Endothelial cell of umbilical vein (primary cell): ENCODE measurements at regions of chr17 and their contacts with region 1.

Region 1: GRCh38 chr17:48131216-48131824 is 23.8 kb downstream of the SNX11 start:
- DNase-seq: peak; percentile 63
- H3K4me3 ChIP-seq: no peak overlapping the region
- H3K27ac ChIP-seq: no peak overlapping the region
- H3K4me1 ChIP-seq: peaks cover 15% of the 10 kb centered on the region
- H3K27me3 ChIP-seq: peaks cover 0 to 2% of the 10 kb centered on the region in 2 experiments
- CTCF ChIP-seq: peak; percentile 75 to 81
- POLR2A ChIP-seq: no peak

Region 2: GRCh38 chr17:48084932-48085444 is 46.3 kb before region 1 on chr17:
- CTCF ChIA-PET with region 1: interaction called, 167 read pairs
- POLR2A ChIA-PET with region 1: no interaction called
- dilution Hi-C with region 1: no loop called
- intact Hi-C with region 1: loop called (anchors 1 kb)
- DNase-seq: no peak
- H3K4me3 ChIP-seq: no peak overlapping the region
- H3K27ac ChIP-seq: no peak overlapping the region
- H3K4me1 ChIP-seq: peaks cover 4% of the 10 kb centered on the region
- H3K27me3 ChIP-seq: no peaks in the 10 kb centered on the region
- CTCF ChIP-seq: no peak
- POLR2A ChIP-seq: no peak

Region 3: DNA sequence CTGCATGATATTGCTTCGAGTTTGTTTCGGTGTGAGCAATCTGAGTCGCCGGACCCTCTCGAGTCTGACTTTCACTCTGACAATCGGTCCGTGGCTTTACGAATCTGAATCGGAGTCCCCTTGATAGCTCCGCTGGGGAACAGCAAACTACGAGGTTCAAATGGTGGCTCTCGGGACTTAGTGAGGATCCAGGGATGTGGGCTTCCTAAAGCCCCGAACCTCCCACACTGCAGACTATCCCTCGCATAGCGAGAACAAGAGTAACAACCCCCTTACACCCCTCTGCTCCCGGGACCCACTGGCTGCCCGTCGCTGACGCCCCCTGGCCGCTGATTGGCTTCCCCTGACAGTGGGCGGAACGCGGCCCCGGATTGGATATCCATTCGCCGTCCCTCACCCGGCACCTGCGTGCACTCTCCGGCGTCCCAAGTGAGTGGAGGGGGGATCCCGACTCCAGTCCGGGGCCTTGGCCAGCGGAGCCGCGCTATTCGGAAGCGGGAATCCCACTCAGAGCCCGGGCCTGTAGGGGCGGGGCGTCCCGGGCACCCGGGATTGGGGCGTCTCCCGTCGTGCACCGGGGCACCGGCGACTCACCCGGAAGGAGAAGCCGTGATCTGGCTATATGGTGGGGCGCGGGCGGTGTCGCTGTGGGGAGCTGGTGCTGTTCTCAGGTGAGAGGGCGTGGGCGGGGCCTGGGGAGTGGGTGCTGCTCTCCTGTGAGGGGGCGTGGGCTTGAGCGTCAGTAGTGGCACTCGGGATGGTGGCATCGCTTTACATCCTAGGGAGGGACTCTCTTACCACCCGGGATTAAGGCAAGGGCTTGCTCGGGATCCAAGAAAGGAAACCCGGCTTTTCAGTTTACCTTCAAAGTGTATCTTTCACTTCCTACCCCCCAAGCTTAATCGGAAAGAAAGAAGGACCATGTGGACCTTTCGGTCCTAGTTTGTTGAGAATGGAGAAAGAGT is 23.9 kb before region 1 on chr17 and contains the start of gene SNX11:
- CTCF ChIA-PET with region 1: interaction called, 12 read pairs
- POLR2A ChIA-PET with region 1: no interaction called
- dilution Hi-C with region 1: no loop called
- intact Hi-C with region 1: loop called (anchors 1 kb)
- DNase-seq: peak; percentile 89
- H3K4me3 ChIP-seq: peak within 1 kb of the TSS; percentile 56 to 99 (median 92)
- H3K27ac ChIP-seq: peak within 1 kb of the TSS; percentile 68
- H3K4me1 ChIP-seq: peaks cover 10% of the 10 kb centered on the region
- H3K27me3 ChIP-seq: no peaks in the 10 kb centered on the region
- CTCF ChIP-seq: no peak
- POLR2A ChIP-seq: peak; percentile 82
- total RNA-seq, gene SNX11: 23.4 and 26.4 TPM in 2 replicates

Region 4: DNA sequence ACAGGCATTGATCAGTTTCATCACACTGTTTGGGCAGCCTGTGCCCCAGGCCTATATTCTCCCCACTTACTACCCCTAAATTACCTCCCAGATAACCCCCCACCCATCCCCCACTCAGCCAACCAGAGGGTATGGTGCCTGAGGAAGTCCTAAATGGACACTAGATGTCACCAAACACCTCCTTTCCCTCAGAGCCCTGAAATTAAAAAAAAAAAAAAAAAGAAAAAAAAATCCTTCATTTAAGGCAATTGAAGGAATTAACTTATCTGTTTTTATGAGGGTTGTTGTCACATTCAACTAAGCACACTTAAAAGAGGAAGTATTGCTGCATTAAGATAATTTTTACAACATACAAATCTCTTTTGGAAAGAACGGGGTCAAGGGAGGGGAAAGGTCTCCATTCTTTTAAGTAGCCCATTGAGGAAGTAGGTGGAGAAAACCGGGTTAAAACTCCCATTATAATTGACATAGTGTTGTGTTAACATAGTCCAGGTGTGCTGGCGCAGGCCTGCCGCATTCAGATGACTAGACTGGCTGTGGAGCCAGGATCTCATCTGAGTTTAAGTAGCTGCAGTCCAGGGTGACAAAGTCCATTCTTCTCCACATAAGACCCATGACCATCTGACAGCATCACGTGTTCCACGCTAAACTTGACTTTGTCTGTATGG is 22.5 kb after region 1 on chr17:
- CTCF ChIA-PET with region 1: interaction called, 10 read pairs
- POLR2A ChIA-PET with region 1: no interaction called
- dilution Hi-C with region 1: no loop called
- intact Hi-C with region 1: no loop called
- DNase-seq: peak; percentile 52
- H3K4me3 ChIP-seq: no peak overlapping the region
- H3K27ac ChIP-seq: no peak overlapping the region
- H3K4me1 ChIP-seq: no peaks in the 10 kb centered on the region
- H3K27me3 ChIP-seq: peaks cover 26 to 36% of the 10 kb centered on the region in 2 experiments
- CTCF ChIP-seq: peak; percentile 31 to 38
- POLR2A ChIP-seq: no peak

Region 5: GRCh38 chr17:48181653-48182052 is 50.3 kb after region 1 on chr17:
- CTCF ChIA-PET with region 1: no interaction called
- POLR2A ChIA-PET with region 1: no interaction called
- dilution Hi-C with region 1: no loop called
- intact Hi-C with region 1: no loop called
- DNase-seq: peak; percentile 31
- H3K4me3 ChIP-seq: no peak overlapping the region
- H3K27ac ChIP-seq: no peak overlapping the region
- H3K4me1 ChIP-seq: no peaks in the 10 kb centered on the region
- H3K27me3 ChIP-seq: peaks cover 9 to 23% of the 10 kb centered on the region in 2 experiments
- CTCF ChIP-seq: peak; percentile 37 to 52
- POLR2A ChIP-seq: no peak

Region 6: DNA sequence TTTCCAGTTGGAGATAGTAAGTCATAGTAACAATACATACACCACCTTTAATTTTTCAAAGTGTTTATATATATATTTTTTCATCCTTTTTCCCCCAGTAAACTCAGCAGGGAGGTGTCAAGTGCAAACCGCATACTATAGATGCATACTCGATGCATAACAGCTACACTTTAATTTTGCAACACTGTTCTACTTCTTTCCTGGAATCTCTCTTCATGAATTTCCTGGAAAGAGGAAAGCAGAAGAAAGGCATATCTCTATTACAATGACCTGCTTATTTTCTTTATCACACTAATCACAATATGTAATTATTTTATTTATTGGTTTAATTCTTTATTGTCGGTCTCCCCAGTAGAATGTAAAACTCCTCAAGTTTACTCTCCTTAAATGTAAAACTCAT is 116.3 kb after region 1 on chr17:
- CTCF ChIA-PET with region 1: no interaction called
- POLR2A ChIA-PET with region 1: no interaction called
- dilution Hi-C with region 1: no loop called
- intact Hi-C with region 1: no loop called
- DNase-seq: no peak
- H3K4me3 ChIP-seq: no peak overlapping the region
- H3K27ac ChIP-seq: no peak overlapping the region
- H3K4me1 ChIP-seq: peaks cover 46% of the 10 kb centered on the region
- H3K27me3 ChIP-seq: no peaks in the 10 kb centered on the region
- CTCF ChIP-seq: no peak
- POLR2A ChIP-seq: no peak

Region 7: GRCh38 chr17:48816774-48817590 is 685.7 kb after region 1 on chr17 and contains the start of gene TTLL6:
- CTCF ChIA-PET with region 1: no interaction called
- POLR2A ChIA-PET with region 1: no interaction called
- dilution Hi-C with region 1: no loop called
- intact Hi-C with region 1: no loop called
- DNase-seq: peak; percentile 85
- H3K4me3 ChIP-seq: peak within 1 kb of the TSS in 2 of 3 experiments; percentile 14 to 40
- H3K27ac ChIP-seq: no peak within 1 kb of the TSS
- H3K4me1 ChIP-seq: peaks cover 6% of the 10 kb centered on the region
- H3K27me3 ChIP-seq: peaks cover 11 to 21% of the 10 kb centered on the region in 2 experiments
- CTCF ChIP-seq: no peak
- POLR2A ChIP-seq: no peak
- total RNA-seq, gene TTLL6: not detected in 2 replicates